Right ventricle myocardium inferior (tissue), 1 donor: ENCODE measurements at regions of chr17 and their contacts with region 1.

Region 1: DNA sequence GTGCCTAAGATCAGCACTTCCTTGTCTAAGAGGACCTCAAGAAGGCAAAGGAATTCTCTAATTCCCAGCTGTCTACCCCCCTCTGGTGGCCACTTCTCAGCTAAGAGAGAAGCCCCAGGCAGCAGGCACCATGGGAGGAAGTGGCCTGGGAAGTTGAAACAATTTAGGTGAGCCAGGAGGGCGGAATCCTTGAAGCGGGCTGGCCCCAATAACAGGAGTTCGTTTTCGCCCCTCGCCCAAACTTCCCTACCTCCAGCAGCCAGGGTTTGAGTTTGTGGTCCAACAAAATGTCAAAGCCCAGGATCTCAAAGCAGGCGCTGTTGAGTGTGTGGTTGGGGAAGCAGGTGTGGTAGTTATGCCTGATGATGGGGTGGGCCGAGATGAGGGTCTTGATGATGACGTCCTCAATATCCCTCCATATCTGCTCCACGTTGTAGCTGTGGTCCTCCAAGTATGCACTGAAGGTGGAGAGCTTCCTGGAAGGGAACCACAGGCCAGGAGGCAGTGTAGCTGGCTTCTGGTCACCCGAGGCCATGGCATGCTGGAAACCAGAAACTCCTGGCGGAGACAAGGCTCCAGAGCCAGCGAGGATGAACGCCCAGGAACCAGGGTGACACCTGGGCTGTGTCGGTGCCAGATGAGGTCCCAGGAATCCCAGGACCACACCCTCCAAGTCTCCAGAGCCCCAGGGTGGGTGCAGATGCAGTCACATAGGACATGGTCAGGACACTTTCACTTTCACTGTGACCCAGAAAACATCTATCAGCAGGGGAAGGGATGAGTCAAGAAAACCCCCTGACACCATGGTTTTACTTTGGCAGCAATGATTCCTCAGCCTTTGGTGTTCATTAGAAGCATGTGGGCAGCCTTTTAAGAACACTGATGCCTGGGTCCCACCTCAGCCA is 25.6 kb downstream of the TTLL6 start:
- DNase-seq: no peak
- ATAC-seq: peak; percentile 69

Region 2: DNA sequence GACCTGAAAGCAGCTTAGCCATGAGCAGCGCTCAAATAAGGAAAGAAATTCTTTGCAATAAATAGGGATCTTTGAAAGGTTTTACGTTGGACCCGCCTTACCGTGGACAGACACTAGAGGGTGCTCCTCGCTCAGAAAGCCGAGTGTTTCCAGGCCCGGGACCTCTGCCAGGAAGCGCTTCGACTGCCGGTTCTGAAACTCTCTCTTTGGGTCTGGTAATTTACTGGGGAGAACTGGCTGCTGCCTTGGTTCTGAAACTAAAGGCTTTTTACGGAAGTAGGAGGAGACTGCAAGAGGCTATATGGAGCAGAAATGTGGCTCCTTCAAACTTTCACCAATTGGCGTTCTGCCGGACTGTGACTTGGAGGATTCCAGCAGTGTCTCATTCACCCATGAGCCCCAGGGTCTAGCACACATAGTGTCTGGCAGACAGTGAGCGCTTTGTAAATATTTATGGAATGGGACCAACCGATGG is 119.6 kb before region 1 on chr17:
- intact Hi-C with region 1: loop called (anchors 2 kb)
- DNase-seq: peak; percentile 86
- ATAC-seq: peak; percentile 77

Region 3: GRCh38 chr17:48724251-48725003 is 67.0 kb before region 1 on chr17:
- intact Hi-C with region 1: loop called (anchors 1 kb)
- DNase-seq: peak; percentile 91
- ATAC-seq: peak; percentile 83

Region 4: DNA sequence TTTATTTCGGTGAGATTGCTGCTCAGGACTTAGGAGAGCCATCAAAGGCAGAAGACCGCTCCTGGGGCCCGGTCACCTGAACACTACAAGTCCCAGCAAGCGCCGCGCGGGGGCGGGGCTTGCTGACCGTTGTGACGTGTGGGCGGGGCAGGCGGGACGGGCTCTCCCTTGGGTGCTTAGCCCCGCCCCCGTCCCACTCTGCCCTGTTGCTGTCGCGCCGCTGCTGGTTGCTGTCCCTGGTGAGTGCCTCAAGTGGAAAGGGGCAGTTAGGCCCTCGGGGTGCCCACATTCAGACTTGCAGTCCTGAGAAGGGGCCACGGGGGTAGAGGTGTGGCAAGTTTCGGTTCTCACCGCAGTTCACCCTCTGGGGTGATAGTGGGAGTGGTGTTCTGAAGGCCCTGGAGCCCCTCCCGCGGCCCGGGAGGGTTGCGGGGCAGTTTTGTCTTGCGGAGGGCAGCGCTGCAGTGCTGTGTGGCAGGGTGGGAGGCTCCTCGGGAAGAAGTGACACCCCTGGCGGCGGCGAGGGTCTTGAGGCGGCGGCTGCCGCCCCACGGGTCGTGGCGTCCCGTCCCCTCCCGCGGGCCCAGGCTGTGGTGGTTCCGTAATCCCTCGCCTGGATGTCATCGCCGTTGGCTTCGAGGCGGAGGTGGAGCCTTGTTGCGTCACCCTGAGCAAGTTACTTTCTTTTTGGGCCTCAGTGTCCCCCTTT is 39.6 kb after region 1 on chr17 and contains the start of gene CALCOCO2:
- intact Hi-C with region 1: no loop called
- DNase-seq: peak; percentile 99
- ATAC-seq: peak; percentile 96
- total RNA-seq, gene CALCOCO2: 321 TPM